HEK293 (cell line): ENCODE measurements at regions of chr1 and their contacts with region 1.

Region 1: GRCh38 chr1:229529639-229530038 is 21.5 kb upstream of the NUP133 start:
- H3K4me3 ChIP-seq: no peak overlapping the region
- H3K27ac ChIP-seq: no peak overlapping the region
- H3K4me1 ChIP-seq: no peaks in the 10 kb centered on the region
- CTCF ChIP-seq: no peak

Region 2: GRCh38 chr1:229470406-229471043 is 59.1 kb before region 1 on chr1:
- CTCF ChIA-PET with region 1: no interaction called
- POLR2A ChIA-PET with region 1: no interaction called
- H3K4me3 ChIP-seq: no peak overlapping the region
- H3K27ac ChIP-seq: no peak overlapping the region
- H3K4me1 ChIP-seq: no peaks in the 10 kb centered on the region
- CTCF ChIP-seq: no peak

Region 3: GRCh38 chr1:229514578-229515275 is 14.9 kb before region 1 on chr1:
- CTCF ChIA-PET with region 1: interaction called, 26 read pairs
- POLR2A ChIA-PET with region 1: no interaction called
- H3K4me3 ChIP-seq: no peak overlapping the region
- H3K27ac ChIP-seq: no peak overlapping the region
- H3K4me1 ChIP-seq: no peaks in the 10 kb centered on the region
- CTCF ChIP-seq: peak; percentile 81